Left colon (tissue), 2 donors: ENCODE measurements at regions of chr7 and their contacts with region 1.

Region 1: DNA sequence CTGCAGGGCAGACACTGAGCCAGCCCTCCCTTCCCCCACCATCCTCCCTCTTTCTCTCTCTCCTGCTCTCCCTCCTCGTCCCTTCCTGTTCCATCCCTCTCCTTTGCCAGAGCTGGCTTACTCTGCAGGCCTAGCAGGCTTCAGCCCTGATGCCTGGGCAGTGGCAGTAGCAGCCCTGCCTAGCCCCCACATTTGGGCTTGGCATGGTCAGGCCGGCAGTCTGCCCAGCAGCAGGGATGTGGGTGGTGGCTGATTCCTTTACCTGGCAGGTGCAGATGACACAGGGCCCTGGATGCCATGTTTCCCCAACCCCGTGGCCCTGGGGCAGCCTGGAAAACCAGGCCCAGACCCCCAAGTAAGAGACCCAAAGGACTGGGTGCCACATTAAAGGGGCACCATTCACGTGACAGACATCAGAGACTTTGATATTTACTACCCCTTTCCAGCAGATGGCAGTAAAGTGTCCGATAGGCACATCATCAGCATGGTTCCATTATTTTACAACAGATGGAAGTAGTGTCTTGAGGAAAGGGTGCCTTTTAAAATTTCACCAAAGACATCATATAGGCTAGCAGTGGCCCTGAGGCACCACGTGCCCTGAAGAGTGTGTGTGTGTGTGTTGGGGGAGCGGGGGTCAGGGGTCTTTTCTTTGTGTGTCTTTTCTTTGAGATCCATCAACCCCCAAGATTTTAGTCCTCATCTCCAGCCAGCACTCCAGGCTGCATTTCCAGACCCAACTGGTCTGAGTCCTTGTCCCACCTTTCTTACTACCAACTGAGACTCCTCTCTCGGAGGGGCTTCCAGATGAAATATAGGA is 5.9 kb downstream of the KCP start:
- DNase-seq: peak in 1 of 2 donors; percentile 18
- ATAC-seq: peak; percentile 51

Region 2: GRCh38 chr7:129091484-129092002 is 187.0 kb after region 1 on chr7:
- intact Hi-C with region 1: loop called in 1 of 2 experiments (anchors 5 kb)
- DNase-seq: peak; percentile 60 to 91
- ATAC-seq: peak; percentile 95